AG04449 (cell line): ENCODE measurements at regions of chr4 and their contacts with region 1.

Region 1: GRCh38 chr4:111136438-111136837 is 513.6 kb upstream of the PITX2 start:
- DNase-seq: peak; percentile 37
- H3K4me3 ChIP-seq: no peak overlapping the region
- CTCF ChIP-seq: peak; percentile 43

Region 2: GRCh38 chr4:111268769-111269414 is 132.5 kb after region 1 on chr4:
- CTCF ChIA-PET with region 1: no interaction called
- POLR2A ChIA-PET with region 1: no interaction called
- DNase-seq: no peak
- H3K4me3 ChIP-seq: no peak overlapping the region
- CTCF ChIP-seq: no peak

Region 3: GRCh38 chr4:111631215-111631999 is 495.0 kb after region 1 on chr4:
- CTCF ChIA-PET with region 1: interaction called, 131 read pairs
- POLR2A ChIA-PET with region 1: interaction called, 3 read pairs
- DNase-seq: no peak
- H3K4me3 ChIP-seq: no peak overlapping the region
- CTCF ChIP-seq: peak; percentile 33